CD8-positive, alpha-beta T cell (primary cell): ENCODE measurements at regions of chr15 and their contacts with region 1.

Region 1: DNA sequence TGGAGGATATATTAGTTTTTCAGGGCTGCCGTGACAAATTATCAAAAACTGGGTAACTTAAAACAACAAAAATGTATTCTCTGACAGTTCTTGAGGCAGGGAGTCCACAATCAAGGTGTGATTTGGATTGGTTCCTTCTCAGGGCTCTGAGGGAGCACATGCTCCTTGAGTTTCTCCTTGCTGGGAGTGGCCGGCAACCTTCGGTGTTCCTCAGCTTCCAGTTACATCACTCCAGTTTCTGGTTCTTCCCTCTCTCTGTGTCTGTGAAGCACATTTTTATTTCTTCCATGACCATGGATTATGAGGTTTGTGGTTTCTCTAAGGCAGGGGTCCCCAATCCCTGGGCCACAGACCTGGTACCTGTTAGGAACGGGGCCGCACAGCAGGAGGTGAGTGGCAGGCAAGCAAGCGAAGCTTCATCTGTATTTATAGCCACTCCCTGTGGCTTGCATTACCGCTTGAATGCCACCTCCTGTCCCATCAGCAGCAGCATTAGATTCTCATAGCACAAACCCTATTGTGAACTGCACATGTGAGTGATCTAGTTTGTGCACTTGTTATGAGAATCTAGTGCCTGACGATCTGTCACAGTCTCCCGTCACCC is 24.3 kb downstream of the LRRC28 start:
- DNase-seq: no peak
- ATAC-seq: no peak
- H3K4me3 ChIP-seq: no peak overlapping the region
- H3K4me3 Mint-ChIP-seq: no peak overlapping the region
- H3K27ac ChIP-seq: no peak overlapping the region
- H3K27ac Mint-ChIP-seq: no peak overlapping the region
- H3K4me1 ChIP-seq: no peaks in the 10 kb centered on the region
- H3K4me1 Mint-ChIP-seq: peaks cover 13% of the 10 kb centered on the region
- H3K27me3 ChIP-seq: no peaks in the 10 kb centered on the region
- H3K27me3 Mint-ChIP-seq: no peaks in the 10 kb centered on the region
- CTCF ChIP-seq: no peak

Region 2: GRCh38 chr15:97728791-97729190 is 1546.8 kb before region 1 on chr15:
- CTCF ChIA-PET with region 1: no interaction called
- POLR2A ChIA-PET with region 1: no interaction called
- intact Hi-C with region 1: no loop called
- DNase-seq: no peak
- ATAC-seq: no peak
- H3K4me3 ChIP-seq: no peak overlapping the region
- H3K4me3 Mint-ChIP-seq: no peak overlapping the region
- H3K27ac ChIP-seq: no peak overlapping the region
- H3K27ac Mint-ChIP-seq: no peak overlapping the region
- H3K4me1 ChIP-seq: no peaks in the 10 kb centered on the region
- H3K4me1 Mint-ChIP-seq: no peaks in the 10 kb centered on the region
- H3K27me3 ChIP-seq: no peaks in the 10 kb centered on the region
- H3K27me3 Mint-ChIP-seq: no peaks in the 10 kb centered on the region
- CTCF ChIP-seq: no peak

Region 3: DNA sequence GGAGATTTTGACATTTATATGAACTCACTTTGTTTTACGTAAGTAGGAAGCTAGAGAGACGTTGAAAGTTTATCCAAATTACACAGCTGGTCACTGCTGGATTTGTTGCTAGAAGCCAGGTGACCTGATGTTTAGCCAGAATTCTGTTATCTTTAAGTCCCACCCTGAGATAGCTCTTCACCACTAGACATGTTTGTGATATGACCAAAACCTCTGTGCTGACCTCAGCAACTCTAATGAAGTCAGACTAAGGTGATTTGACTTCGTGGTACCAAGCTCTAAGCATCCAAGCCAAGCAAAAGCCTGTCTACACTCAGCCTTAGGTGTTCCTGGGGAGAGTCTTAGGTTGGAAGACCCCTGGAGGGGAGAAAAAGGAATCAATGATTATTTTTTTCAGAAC is 1212.8 kb before region 1 on chr15:
- CTCF ChIA-PET with region 1: no interaction called
- POLR2A ChIA-PET with region 1: no interaction called
- intact Hi-C with region 1: no loop called
- DNase-seq: no peak
- ATAC-seq: no peak
- H3K4me3 ChIP-seq: no peak overlapping the region
- H3K4me3 Mint-ChIP-seq: no peak overlapping the region
- H3K27ac ChIP-seq: no peak overlapping the region
- H3K27ac Mint-ChIP-seq: no peak overlapping the region
- H3K4me1 ChIP-seq: no peaks in the 10 kb centered on the region
- H3K4me1 Mint-ChIP-seq: no peaks in the 10 kb centered on the region
- H3K27me3 ChIP-seq: no peaks in the 10 kb centered on the region
- H3K27me3 Mint-ChIP-seq: peaks cover 3% of the 10 kb centered on the region
- CTCF ChIP-seq: no peak

Region 4: GRCh38 chr15:99264125-99264524 is 11.5 kb before region 1 on chr15:
- CTCF ChIA-PET with region 1: interaction called, 17 read pairs
- POLR2A ChIA-PET with region 1: no interaction called
- intact Hi-C with region 1: no loop called
- DNase-seq: no peak
- ATAC-seq: no peak
- H3K4me3 ChIP-seq: no peak overlapping the region
- H3K4me3 Mint-ChIP-seq: no peak overlapping the region
- H3K27ac ChIP-seq: no peak overlapping the region
- H3K27ac Mint-ChIP-seq: no peak overlapping the region
- H3K4me1 ChIP-seq: no peaks in the 10 kb centered on the region
- H3K4me1 Mint-ChIP-seq: no peaks in the 10 kb centered on the region
- H3K27me3 ChIP-seq: no peaks in the 10 kb centered on the region
- H3K27me3 Mint-ChIP-seq: no peaks in the 10 kb centered on the region
- CTCF ChIP-seq: no peak

Region 5: GRCh38 chr15:99343881-99344551 is 68.4 kb after region 1 on chr15:
- CTCF ChIA-PET with region 1: no interaction called
- POLR2A ChIA-PET with region 1: no interaction called
- intact Hi-C with region 1: loop called in 1 of 2 experiments (anchors 10 kb)
- DNase-seq: peak; percentile 12 to 76 (median 53)
- ATAC-seq: peak; percentile 79
- H3K4me3 ChIP-seq: no peak overlapping the region
- H3K4me3 Mint-ChIP-seq: no peak overlapping the region
- H3K27ac ChIP-seq: no peak overlapping the region
- H3K27ac Mint-ChIP-seq: no peak overlapping the region
- H3K4me1 ChIP-seq: no peaks in the 10 kb centered on the region
- H3K4me1 Mint-ChIP-seq: peaks cover 5% of the 10 kb centered on the region
- H3K27me3 ChIP-seq: no peaks in the 10 kb centered on the region
- H3K27me3 Mint-ChIP-seq: no peaks in the 10 kb centered on the region
- CTCF ChIP-seq: peak; percentile 62

Region 6: GRCh38 chr15:99755692-99756409 is 480.2 kb after region 1 on chr15:
- CTCF ChIA-PET with region 1: interaction called, 89 read pairs
- POLR2A ChIA-PET with region 1: no interaction called
- intact Hi-C with region 1: loop called (anchors 1 kb)
- DNase-seq: peak; percentile 8 to 76 (median 24)
- ATAC-seq: peak; percentile 71
- H3K4me3 ChIP-seq: no peak overlapping the region
- H3K4me3 Mint-ChIP-seq: no peak overlapping the region
- H3K27ac ChIP-seq: no peak overlapping the region
- H3K27ac Mint-ChIP-seq: no peak overlapping the region
- H3K4me1 ChIP-seq: peaks cover 4% of the 10 kb centered on the region
- H3K4me1 Mint-ChIP-seq: peaks cover 3% of the 10 kb centered on the region
- H3K27me3 ChIP-seq: no peaks in the 10 kb centered on the region
- H3K27me3 Mint-ChIP-seq: no peaks in the 10 kb centered on the region
- CTCF ChIP-seq: peak; percentile 89

Region 7: GRCh38 chr15:100635406-100636071 is 1359.9 kb after region 1 on chr15:
- CTCF ChIA-PET with region 1: no interaction called
- POLR2A ChIA-PET with region 1: no interaction called
- intact Hi-C with region 1: loop called in 1 of 2 experiments (anchors 5 kb)
- DNase-seq: no peak
- ATAC-seq: no peak
- H3K4me3 ChIP-seq: no peak overlapping the region
- H3K4me3 Mint-ChIP-seq: no peak overlapping the region
- H3K27ac ChIP-seq: no peak overlapping the region
- H3K27ac Mint-ChIP-seq: no peak overlapping the region
- H3K4me1 ChIP-seq: peaks cover 18% of the 10 kb centered on the region
- H3K4me1 Mint-ChIP-seq: peaks cover 74% of the 10 kb centered on the region
- H3K27me3 ChIP-seq: no peaks in the 10 kb centered on the region
- H3K27me3 Mint-ChIP-seq: no peaks in the 10 kb centered on the region
- CTCF ChIP-seq: no peak